Activated CD4-positive, alpha-beta memory T cell treated with anti-CD3 and anti-CD28 coated beads, Interleukin-2, amount 10 ng/mL, durations not matched to agents 7 days and 5 days (primary cell): ENCODE measurements at regions of chr18 and their contacts with region 1.

Region 1: DNA sequence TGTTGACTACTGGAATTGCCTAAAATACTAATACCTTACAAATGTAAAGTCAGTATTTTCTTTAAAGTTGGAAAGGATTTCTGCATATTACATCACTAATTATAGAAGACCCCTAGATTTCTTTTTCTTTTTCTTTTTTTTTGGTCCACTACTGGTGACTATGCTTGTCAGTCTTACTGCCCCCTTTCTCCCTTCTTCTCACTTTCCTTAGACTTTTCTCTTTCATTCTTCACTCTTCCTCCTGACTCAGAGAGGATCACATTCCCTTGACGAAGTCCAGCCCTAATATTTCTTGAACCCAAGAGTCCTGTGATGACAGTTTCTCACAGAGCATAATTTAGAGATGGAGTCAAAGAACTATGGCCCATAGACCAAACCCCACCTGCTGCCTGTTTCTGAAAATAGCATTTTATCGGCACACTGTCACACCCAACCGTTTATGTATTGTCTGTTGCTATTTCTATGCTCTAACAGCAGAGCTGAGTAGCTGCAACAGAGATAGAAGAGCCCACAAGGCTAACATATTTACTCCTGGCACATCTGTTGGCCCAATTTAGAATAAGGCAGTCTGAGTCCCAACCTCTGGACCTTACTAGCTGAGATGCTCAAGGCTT is 40.6 kb upstream of the RIOK3 start:
- DNase-seq: no peak
- H3K4me3 Mint-ChIP-seq: no peak overlapping the region
- H3K27ac Mint-ChIP-seq: no peak overlapping the region
- H3K4me1 Mint-ChIP-seq: no peaks in the 10 kb centered on the region
- H3K27me3 Mint-ChIP-seq: no peaks in the 10 kb centered on the region

Region 2: DNA sequence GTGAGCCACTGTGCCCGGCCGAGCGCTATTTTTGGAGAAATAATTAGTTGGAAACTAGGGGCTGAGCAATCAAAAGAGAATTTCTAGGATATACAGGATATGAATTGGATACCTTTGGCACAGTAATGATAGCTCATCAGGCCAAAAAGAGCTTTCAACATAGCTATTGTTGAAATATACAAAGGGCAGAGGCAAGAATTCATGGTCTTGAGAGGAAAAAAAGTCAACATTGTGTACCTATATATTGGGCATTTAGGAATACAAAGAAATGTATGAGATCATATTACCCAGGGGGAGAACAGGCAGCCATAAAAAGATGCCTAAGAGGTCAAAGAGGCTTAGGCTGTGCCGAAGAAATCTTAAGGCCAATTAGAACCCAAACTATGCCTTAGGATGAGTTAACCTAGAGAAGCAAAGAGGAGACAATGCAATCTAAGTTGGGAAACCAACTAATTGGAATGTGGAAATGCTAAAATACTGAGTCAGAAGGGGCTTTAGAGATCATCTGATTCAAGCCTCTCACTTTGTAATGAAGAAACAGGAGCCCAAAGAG is 380.4 kb before region 1 on chr18:
- CTCF ChIA-PET with region 1: interaction called, 12 read pairs
- POLR2A ChIA-PET with region 1: no interaction called
- DNase-seq: no peak
- H3K4me3 Mint-ChIP-seq: no peak overlapping the region
- H3K27ac Mint-ChIP-seq: no peak overlapping the region
- H3K4me1 Mint-ChIP-seq: peaks cover 2% of the 10 kb centered on the region
- H3K27me3 Mint-ChIP-seq: no peaks in the 10 kb centered on the region

Region 3: DNA sequence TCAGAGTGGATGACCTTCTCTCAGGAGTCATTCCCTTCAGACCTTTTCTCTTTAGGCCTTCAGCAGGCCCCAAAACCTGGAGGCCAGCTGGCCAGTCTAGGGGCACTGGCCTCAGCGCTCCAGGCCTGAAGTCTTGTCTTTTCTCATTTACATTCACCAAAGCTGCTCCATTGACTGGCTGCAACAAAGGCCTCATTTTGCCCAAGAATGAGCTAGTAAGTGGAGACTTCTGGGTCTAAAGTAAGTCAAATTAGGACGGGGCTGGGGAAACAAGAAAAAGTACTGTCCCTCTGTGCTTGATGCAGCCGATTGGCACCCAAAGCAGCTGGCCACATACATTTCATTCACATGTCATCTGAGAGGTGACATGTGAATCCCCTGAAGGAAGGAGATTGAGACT is 43.2 kb before region 1 on chr18:
- CTCF ChIA-PET with region 1: no interaction called
- POLR2A ChIA-PET with region 1: no interaction called
- DNase-seq: no peak
- H3K4me3 Mint-ChIP-seq: no peak overlapping the region
- H3K27ac Mint-ChIP-seq: no peak overlapping the region
- H3K4me1 Mint-ChIP-seq: no peaks in the 10 kb centered on the region
- H3K27me3 Mint-ChIP-seq: no peaks in the 10 kb centered on the region